ENCODE measurements at regions of chr5 and their contacts with region 1.

Region 1: DNA sequence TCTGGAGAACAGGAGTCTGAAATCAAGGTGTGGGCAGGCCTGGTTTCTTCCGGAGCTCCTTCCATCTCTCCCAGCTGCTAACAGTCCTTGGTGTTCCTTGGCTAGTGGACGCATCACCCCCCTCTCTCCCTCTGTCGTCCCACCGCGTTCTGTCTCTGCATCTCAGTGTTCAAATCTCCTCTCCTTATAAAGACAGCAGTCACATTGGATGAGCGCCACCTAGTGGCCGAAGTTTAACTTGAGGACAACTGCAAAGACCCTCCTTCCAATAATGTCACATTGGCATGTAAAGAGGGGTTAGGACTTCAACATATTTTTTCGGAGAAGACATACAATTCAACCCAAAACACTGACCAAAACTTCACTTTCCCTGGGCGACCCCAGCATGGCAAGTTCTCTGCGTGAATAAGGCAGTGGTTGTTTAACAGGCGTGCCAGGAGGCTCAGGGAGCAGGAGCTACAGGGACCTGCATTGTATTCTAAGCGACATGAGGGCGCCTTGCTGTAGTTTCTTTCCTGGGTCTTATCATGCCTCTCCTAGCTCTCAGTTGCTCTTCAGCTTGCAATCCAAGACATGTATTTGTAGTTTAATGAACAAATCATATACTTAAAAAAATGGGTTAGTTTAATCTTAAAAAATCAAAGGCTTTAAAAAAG is 27.9 kb upstream of the BASP1 start:
- DNase-seq: peak; percentile 24
- ATAC-seq: peak; percentile 92
- H3K4me3 ChIP-seq: no peak overlapping the region
- H3K27ac ChIP-seq: no peak overlapping the region
- H3K4me1 ChIP-seq: no peaks in the 10 kb centered on the region
- H3K27me3 ChIP-seq: no peaks in the 10 kb centered on the region; a peak in 1 of 4 replicates
- CTCF ChIP-seq: peak; percentile 65 to 80 (median 77)
- EP300 ChIP-seq: no peak
- POLR2A ChIP-seq: no peak
- RAD21 ChIP-seq: peak; percentile 54

Region 2: GRCh38 chr5:16685069-16685468 is 504.4 kb before region 1 on chr5:
- CTCF ChIA-PET with region 1: no interaction called
- POLR2A ChIA-PET with region 1: no interaction called
- RAD21 ChIA-PET with region 1: no interaction called
- SMC1A ChIA-PET with region 1: no interaction called
- in situ Hi-C with region 1: no loop called
- intact Hi-C with region 1: loop called (anchors 5 kb)
- DNase-seq: no peak
- ATAC-seq: no peak
- H3K4me3 ChIP-seq: no peak overlapping the region
- H3K27ac ChIP-seq: no peak overlapping the region
- H3K4me1 ChIP-seq: no peaks in the 10 kb centered on the region
- H3K27me3 ChIP-seq: no peaks in the 10 kb centered on the region
- CTCF ChIP-seq: no peak
- EP300 ChIP-seq: no peak
- POLR2A ChIP-seq: no peak
- RAD21 ChIP-seq: no peak

Region 3: DNA sequence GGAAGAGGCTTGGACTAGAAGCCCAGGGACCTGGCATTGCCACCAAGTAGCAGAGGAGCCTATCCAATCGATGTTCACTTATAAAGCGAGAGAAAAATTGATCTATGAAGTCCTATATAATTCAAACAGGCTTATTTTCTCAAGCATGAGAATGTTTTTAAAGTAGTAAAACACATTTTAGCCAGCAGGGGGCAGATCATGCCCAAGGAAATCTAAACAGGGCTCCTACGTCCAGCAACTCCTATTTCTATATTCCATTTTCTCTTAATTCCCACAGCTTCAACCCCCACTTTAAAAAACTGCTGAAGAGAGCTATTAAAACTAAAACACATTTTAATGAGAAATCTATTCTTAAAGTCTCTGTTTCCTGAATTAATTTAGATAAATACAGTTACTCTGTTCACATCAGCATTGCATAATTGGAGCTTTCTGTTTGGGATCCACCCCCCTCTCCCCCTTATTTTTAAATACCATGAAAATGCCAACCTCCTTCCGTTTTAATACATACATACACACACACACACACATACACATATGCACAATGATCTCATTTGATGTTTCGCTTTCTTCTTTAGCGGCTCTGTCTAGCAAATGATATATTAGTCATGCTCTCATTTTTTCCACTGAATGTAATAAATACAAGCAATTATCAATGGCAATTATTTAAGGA is 398.3 kb before region 1 on chr5:
- CTCF ChIA-PET with region 1: interaction called, 53 read pairs
- POLR2A ChIA-PET with region 1: no interaction called
- RAD21 ChIA-PET with region 1: no interaction called
- SMC1A ChIA-PET with region 1: interaction called, 14 read pairs
- in situ Hi-C with region 1: loop called (anchors 5 kb)
- intact Hi-C with region 1: loop called (anchors 1 kb)
- DNase-seq: peak; percentile 24
- ATAC-seq: peak; percentile 76
- H3K4me3 ChIP-seq: no peak overlapping the region
- H3K27ac ChIP-seq: no peak overlapping the region
- H3K4me1 ChIP-seq: no peaks in the 10 kb centered on the region; the same call in 1 of the 2 replicates
- H3K27me3 ChIP-seq: no peaks in the 10 kb centered on the region
- CTCF ChIP-seq: peak; percentile 42 to 66 (median 52); a peak in 5 of 6 replicates
- EP300 ChIP-seq: no peak
- POLR2A ChIP-seq: no peak
- RAD21 ChIP-seq: peak; percentile 73

Region 4: GRCh38 chr5:16934123-16934522 is 255.4 kb before region 1 on chr5:
- CTCF ChIA-PET with region 1: interaction called, 9 read pairs
- POLR2A ChIA-PET with region 1: no interaction called
- RAD21 ChIA-PET with region 1: no interaction called
- SMC1A ChIA-PET with region 1: no interaction called
- in situ Hi-C with region 1: loop called (anchors 10 kb)
- intact Hi-C with region 1: loop called (anchors 1 kb)
- DNase-seq: no peak
- ATAC-seq: peak; percentile 77
- H3K4me3 ChIP-seq: no peak overlapping the region
- H3K27ac ChIP-seq: no peak overlapping the region
- H3K4me1 ChIP-seq: no peaks in the 10 kb centered on the region
- H3K27me3 ChIP-seq: peaks cover 0 to 29% of the 10 kb centered on the region in 2 experiments; a peak in 2 of 4 replicates
- CTCF ChIP-seq: peak; percentile 58 to 76 (median 69)
- EP300 ChIP-seq: no peak
- POLR2A ChIP-seq: no peak
- RAD21 ChIP-seq: 0 out of 2 replicates have a peak, but pooled peaks have one; percentile 32

Region 5: GRCh38 chr5:17204133-17204489 is 14.6 kb after region 1 on chr5:
- CTCF ChIA-PET with region 1: interaction called, 26 read pairs
- POLR2A ChIA-PET with region 1: no interaction called
- RAD21 ChIA-PET with region 1: no interaction called
- SMC1A ChIA-PET with region 1: interaction called, 3 read pairs
- in situ Hi-C with region 1: no loop called
- intact Hi-C with region 1: no loop called
- DNase-seq: no peak
- ATAC-seq: no peak
- H3K4me3 ChIP-seq: no peak overlapping the region
- H3K27ac ChIP-seq: no peak overlapping the region
- H3K4me1 ChIP-seq: no peaks in the 10 kb centered on the region
- H3K27me3 ChIP-seq: no peaks in the 10 kb centered on the region
- CTCF ChIP-seq: no peak
- EP300 ChIP-seq: no peak
- POLR2A ChIP-seq: no peak
- RAD21 ChIP-seq: no peak

Measured in GM12878 (cell line).